Mucosa of descending colon (tissue), 3 donors: ENCODE measurements at regions of chr17 and their contacts with region 1.

Region 1: GRCh38 chr17:43940630-43941029 is 1.6 kb downstream of the PPY start:
- DNase-seq: no peak
- ATAC-seq: no peak
- H3K4me3 ChIP-seq: no peak overlapping the region
- H3K4me1 ChIP-seq: no peaks in the 10 kb centered on the region
- CTCF ChIP-seq: no peak

Region 2: GRCh38 chr17:43994272-43995149 is 53.9 kb after region 1 on chr17:
- intact Hi-C with region 1: loop called (anchors 2 to 10 kb)
- DNase-seq: peak; percentile 54 to 67 (median 57)
- ATAC-seq: peak; percentile 82
- H3K4me3 ChIP-seq: no peak overlapping the region
- H3K4me1 ChIP-seq: no peaks in the 10 kb centered on the region
- CTCF ChIP-seq: peak; percentile 56

Region 3: DNA sequence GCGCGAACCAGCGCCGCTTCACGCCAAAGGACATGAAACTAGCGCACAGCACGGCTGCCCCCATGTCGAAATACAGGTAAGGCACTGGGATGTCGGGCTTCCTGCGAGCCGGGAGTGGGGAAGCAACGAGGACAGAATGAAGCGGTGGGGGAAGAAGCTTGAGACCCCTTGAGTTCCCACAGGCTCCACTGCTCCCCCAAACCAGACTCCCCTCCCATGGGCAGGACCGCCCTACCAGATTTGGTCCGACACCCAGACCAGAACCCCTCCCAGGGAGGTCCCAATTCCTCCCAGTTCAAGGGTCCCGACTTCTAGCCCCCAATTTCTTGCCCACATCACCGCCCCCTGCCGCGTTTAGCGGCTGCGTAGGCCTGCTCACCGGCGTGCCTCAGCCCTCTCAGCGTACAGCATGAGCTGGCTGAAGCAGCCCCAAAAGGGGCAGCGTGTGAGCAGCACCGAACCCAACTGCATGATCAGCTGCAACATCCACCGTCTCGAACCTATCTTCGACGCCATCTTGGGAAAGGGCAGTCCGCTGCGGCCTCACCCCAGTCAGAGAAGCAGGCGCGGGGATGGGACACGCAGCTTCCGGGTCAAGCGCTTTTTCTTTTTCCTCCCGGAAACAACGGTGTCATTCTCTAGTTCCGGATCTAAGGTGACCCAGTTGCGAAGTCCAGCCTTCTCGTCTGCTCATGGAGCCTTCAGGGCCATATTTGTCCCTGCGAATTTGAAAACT is 74.0 kb after region 1 on chr17 and contains the start of gene TMEM101:
- intact Hi-C with region 1: no loop called
- DNase-seq: peak; percentile 91 to 94 (median 93)
- ATAC-seq: peak; percentile 99
- H3K4me3 ChIP-seq: peak within 1 kb of the TSS; percentile 52
- H3K4me1 ChIP-seq: peaks cover 8% of the 10 kb centered on the region
- CTCF ChIP-seq: no peak
- total RNA-seq, gene TMEM101: 23.0 to 27.7 (median 23.8) TPM

Region 4: GRCh38 chr17:44159519-44160210 is 219.0 kb after region 1 on chr17:
- intact Hi-C with region 1: loop called in 1 of 2 experiments (anchors 10 kb)
- DNase-seq: no peak
- ATAC-seq: no peak
- H3K4me3 ChIP-seq: no peak overlapping the region
- H3K4me1 ChIP-seq: no peaks in the 10 kb centered on the region
- CTCF ChIP-seq: no peak